Activated CD8-positive, alpha-beta T cell treated with anti-CD3 and anti-CD28 coated beads, Interleukin-2, amount 10 ng/mL, durations not matched to agents 7 days and 5 days (primary cell): ENCODE measurements at regions of chr19 and their contacts with region 1.

Region 1: GRCh38 chr19:17405250-17406038 is at the start of gene BST2:
- DNase-seq: peak; percentile 78
- ATAC-seq: peak; percentile 82
- H3K4me3 Mint-ChIP-seq: peak within 1 kb of the TSS; percentile 86
- H3K27ac Mint-ChIP-seq: peak within 1 kb of the TSS; percentile 97
- H3K4me1 Mint-ChIP-seq: peaks cover 42% of the 10 kb centered on the region
- H3K27me3 Mint-ChIP-seq: no peaks in the 10 kb centered on the region
- total RNA-seq, gene BST2: 222 to 230 TPM

Region 2: GRCh38 chr19:17419621-17420466 is 14.4 kb after region 1 on chr19 and contains the start of gene MVB12A:
- CTCF ChIA-PET with region 1: interaction called, 6 read pairs
- POLR2A ChIA-PET with region 1: interaction called, 36 read pairs
- DNase-seq: peak; percentile 97
- ATAC-seq: peak; percentile 94
- H3K4me3 Mint-ChIP-seq: peak within 1 kb of the TSS; percentile 93
- H3K27ac Mint-ChIP-seq: peak within 1 kb of the TSS; percentile 96
- H3K4me1 Mint-ChIP-seq: peaks cover 28% of the 10 kb centered on the region
- H3K27me3 Mint-ChIP-seq: no peaks in the 10 kb centered on the region
- total RNA-seq, gene MVB12A: 36.6 to 40.3 TPM